ENCODE measurements at regions of chr16 and their contacts with region 1.

Region 1: GRCh38 chr16:89484923-89485679 is 5.3 kb downstream of the ANKRD11 start:
- DNase-seq: peak in 5 of 14 experiments; percentile 15 to 70 (median 60)
- ATAC-seq: no peak
- H3K4me3 ChIP-seq: peak overlapping the region; percentile 24
- H3K4me3 Mint-ChIP-seq: peak overlapping the region; percentile 89
- H3K27ac ChIP-seq: peak overlapping the region; percentile 25 to 79
- H3K27ac Mint-ChIP-seq: peak overlapping the region; percentile 97
- H3K4me1 ChIP-seq: peaks cover 81% of the 10 kb centered on the region
- H3K4me1 Mint-ChIP-seq: peaks cover 89% of the 10 kb centered on the region
- H3K27me3 ChIP-seq: no peaks in the 10 kb centered on the region
- H3K27me3 Mint-ChIP-seq: no peaks in the 10 kb centered on the region
- CTCF ChIP-seq: no peak

Region 2: DNA sequence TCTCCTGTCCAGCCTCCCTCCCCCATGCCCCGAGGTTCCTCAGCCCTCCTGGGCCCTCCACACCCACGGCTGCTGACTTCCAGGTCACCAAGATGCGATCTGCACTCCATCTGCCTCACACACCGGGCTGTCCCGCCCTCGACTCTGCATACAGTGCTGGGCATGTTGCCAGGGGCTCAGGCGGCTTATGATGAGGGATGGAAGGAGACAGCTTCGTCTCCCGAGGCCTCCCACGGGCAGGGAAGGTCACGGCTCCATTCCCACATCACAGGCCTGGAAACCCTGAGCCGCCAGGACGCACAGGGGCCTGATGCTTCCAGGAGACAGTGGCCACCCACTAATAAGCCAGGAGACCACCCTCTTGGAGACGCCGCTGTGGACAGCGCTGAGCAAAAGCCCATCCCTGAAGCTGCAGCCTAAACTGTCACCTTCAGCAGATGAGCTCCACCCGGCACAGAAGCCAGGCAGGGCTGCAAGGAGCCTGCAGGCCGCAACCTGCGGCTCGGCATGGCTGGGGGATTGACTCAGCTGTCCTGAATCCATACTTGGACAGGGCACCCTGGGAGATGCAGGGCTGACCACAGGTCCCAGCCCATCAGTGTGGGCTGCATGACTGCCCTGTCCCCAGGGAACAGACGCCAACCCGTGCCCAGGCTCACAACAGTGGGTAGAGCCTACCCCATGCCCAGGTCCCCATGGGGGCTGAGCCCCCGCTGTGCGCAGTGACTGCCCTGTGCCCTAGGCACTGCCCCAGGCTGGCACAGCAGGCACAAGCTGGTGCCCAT is 1650.3 kb before region 1 on chr16:
- CTCF ChIA-PET with region 1: no interaction called
- POLR2A ChIA-PET with region 1: no interaction called
- intact Hi-C with region 1: no loop called
- DNase-seq: no peak
- ATAC-seq: no peak
- H3K4me3 ChIP-seq: no peak overlapping the region
- H3K4me3 Mint-ChIP-seq: no peak overlapping the region
- H3K27ac ChIP-seq: no peak overlapping the region
- H3K27ac Mint-ChIP-seq: no peak overlapping the region
- H3K4me1 ChIP-seq: no peaks in the 10 kb centered on the region
- H3K4me1 Mint-ChIP-seq: no peaks in the 10 kb centered on the region
- H3K27me3 ChIP-seq: no peaks in the 10 kb centered on the region
- H3K27me3 Mint-ChIP-seq: no peaks in the 10 kb centered on the region
- CTCF ChIP-seq: no peak

Region 3: GRCh38 chr16:89319883-89320781 is 165.0 kb before region 1 on chr16:
- CTCF ChIA-PET with region 1: interaction called, 4 read pairs
- POLR2A ChIA-PET with region 1: interaction called, 10 read pairs
- intact Hi-C with region 1: loop called in 1 of 2 experiments (anchors 5 kb)
- DNase-seq: peak in 5 of 14 experiments; percentile 21 to 55 (median 45)
- ATAC-seq: no peak
- H3K4me3 ChIP-seq: no peak overlapping the region
- H3K4me3 Mint-ChIP-seq: peak overlapping the region; percentile 38
- H3K27ac ChIP-seq: no peak overlapping the region
- H3K27ac Mint-ChIP-seq: peak overlapping the region; percentile 98
- H3K4me1 ChIP-seq: peaks cover 100% of the 10 kb centered on the region
- H3K4me1 Mint-ChIP-seq: peaks cover 91% of the 10 kb centered on the region
- H3K27me3 ChIP-seq: no peaks in the 10 kb centered on the region
- H3K27me3 Mint-ChIP-seq: no peaks in the 10 kb centered on the region
- CTCF ChIP-seq: no peak

Region 4: GRCh38 chr16:89330177-89330856 is 154.8 kb before region 1 on chr16:
- CTCF ChIA-PET with region 1: no interaction called
- POLR2A ChIA-PET with region 1: interaction called, 4 read pairs
- intact Hi-C with region 1: loop called (anchors 2 to 5 kb)
- DNase-seq: peak in 6 of 14 experiments; percentile 32 to 84 (median 72)
- ATAC-seq: peak; percentile 67
- H3K4me3 ChIP-seq: peak overlapping the region; percentile 13
- H3K4me3 Mint-ChIP-seq: peak overlapping the region; percentile 10
- H3K27ac ChIP-seq: peak overlapping the region; percentile 60 to 67
- H3K27ac Mint-ChIP-seq: peak overlapping the region; percentile 80
- H3K4me1 ChIP-seq: peaks cover 82% of the 10 kb centered on the region
- H3K4me1 Mint-ChIP-seq: peaks cover 84% of the 10 kb centered on the region
- H3K27me3 ChIP-seq: no peaks in the 10 kb centered on the region
- H3K27me3 Mint-ChIP-seq: no peaks in the 10 kb centered on the region
- CTCF ChIP-seq: no peak

Region 5: GRCh38 chr16:89410794-89411309 is 74.2 kb before region 1 on chr16:
- CTCF ChIA-PET with region 1: interaction called, 4 read pairs
- POLR2A ChIA-PET with region 1: interaction called, 9 read pairs
- intact Hi-C with region 1: loop called (anchors 2 to 5 kb)
- DNase-seq: peak in 5 of 14 experiments; percentile 28 to 54 (median 34)
- ATAC-seq: no peak
- H3K4me3 ChIP-seq: no peak overlapping the region
- H3K4me3 Mint-ChIP-seq: peak overlapping the region; percentile 54
- H3K27ac ChIP-seq: peak overlapping the region; percentile 34 to 69
- H3K27ac Mint-ChIP-seq: peak overlapping the region; percentile 95
- H3K4me1 ChIP-seq: peaks cover 92% of the 10 kb centered on the region
- H3K4me1 Mint-ChIP-seq: peaks cover 87% of the 10 kb centered on the region
- H3K27me3 ChIP-seq: no peaks in the 10 kb centered on the region
- H3K27me3 Mint-ChIP-seq: no peaks in the 10 kb centered on the region
- CTCF ChIP-seq: no peak

Region 6: GRCh38 chr16:89442990-89443731 is 41.9 kb before region 1 on chr16:
- CTCF ChIA-PET with region 1: no interaction called
- POLR2A ChIA-PET with region 1: interaction called, 15 read pairs
- intact Hi-C with region 1: loop called (anchors 2 to 5 kb)
- DNase-seq: peak in 2 of 14 experiments; percentile 28 to 43
- ATAC-seq: peak; percentile 33
- H3K4me3 ChIP-seq: no peak overlapping the region
- H3K4me3 Mint-ChIP-seq: peak overlapping the region; percentile 75
- H3K27ac ChIP-seq: no peak overlapping the region
- H3K27ac Mint-ChIP-seq: peak overlapping the region; percentile 48
- H3K4me1 ChIP-seq: peaks cover 92% of the 10 kb centered on the region
- H3K4me1 Mint-ChIP-seq: peaks cover 22% of the 10 kb centered on the region
- H3K27me3 ChIP-seq: no peaks in the 10 kb centered on the region
- H3K27me3 Mint-ChIP-seq: no peaks in the 10 kb centered on the region
- CTCF ChIP-seq: no peak

Region 7: DNA sequence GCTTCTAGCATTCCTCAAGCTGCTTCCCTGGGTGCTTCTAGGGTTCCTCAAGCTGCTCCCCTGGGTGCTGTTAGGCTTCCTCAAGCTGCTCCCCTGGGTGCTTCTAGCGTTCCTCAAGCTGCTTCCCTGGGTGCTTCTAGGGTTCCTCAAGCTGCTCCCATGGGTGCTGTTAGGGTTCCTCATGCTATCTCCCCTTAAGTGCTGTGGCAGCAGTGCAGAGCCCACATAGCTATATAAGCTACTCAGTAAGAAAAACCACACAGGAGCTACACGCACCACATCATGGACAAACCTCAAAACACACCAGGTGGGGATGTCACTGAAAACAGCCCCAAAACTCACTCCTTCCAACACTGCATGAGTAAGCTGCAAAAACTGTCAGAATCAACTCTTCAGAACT is 29.9 kb before region 1 on chr16:
- CTCF ChIA-PET with region 1: interaction called, 4 read pairs
- POLR2A ChIA-PET with region 1: interaction called, 11 read pairs
- intact Hi-C with region 1: no loop called
- DNase-seq: peak in 3 of 14 experiments; percentile 18 to 49 (median 47)
- ATAC-seq: peak; percentile 75
- H3K4me3 ChIP-seq: no peak overlapping the region
- H3K4me3 Mint-ChIP-seq: peak overlapping the region; percentile 52
- H3K27ac ChIP-seq: no peak overlapping the region
- H3K27ac Mint-ChIP-seq: peak overlapping the region; percentile 43
- H3K4me1 ChIP-seq: peaks cover 75% of the 10 kb centered on the region
- H3K4me1 Mint-ChIP-seq: peaks cover 80% of the 10 kb centered on the region
- H3K27me3 ChIP-seq: no peaks in the 10 kb centered on the region
- H3K27me3 Mint-ChIP-seq: no peaks in the 10 kb centered on the region
- CTCF ChIP-seq: no peak

Region 8: GRCh38 chr16:89473791-89474414 is 11.2 kb before region 1 on chr16:
- CTCF ChIA-PET with region 1: interaction called, 9 read pairs
- POLR2A ChIA-PET with region 1: interaction called, 12 read pairs
- intact Hi-C with region 1: loop called in 1 of 2 experiments (anchors 2 kb)
- DNase-seq: no peak
- ATAC-seq: no peak
- H3K4me3 ChIP-seq: no peak overlapping the region
- H3K4me3 Mint-ChIP-seq: peak overlapping the region; percentile 79
- H3K27ac ChIP-seq: no peak overlapping the region
- H3K27ac Mint-ChIP-seq: peak overlapping the region; percentile 71
- H3K4me1 ChIP-seq: peaks cover 95% of the 10 kb centered on the region
- H3K4me1 Mint-ChIP-seq: peaks cover 82% of the 10 kb centered on the region
- H3K27me3 ChIP-seq: no peaks in the 10 kb centered on the region
- H3K27me3 Mint-ChIP-seq: no peaks in the 10 kb centered on the region
- CTCF ChIP-seq: no peak

Region 9: DNA sequence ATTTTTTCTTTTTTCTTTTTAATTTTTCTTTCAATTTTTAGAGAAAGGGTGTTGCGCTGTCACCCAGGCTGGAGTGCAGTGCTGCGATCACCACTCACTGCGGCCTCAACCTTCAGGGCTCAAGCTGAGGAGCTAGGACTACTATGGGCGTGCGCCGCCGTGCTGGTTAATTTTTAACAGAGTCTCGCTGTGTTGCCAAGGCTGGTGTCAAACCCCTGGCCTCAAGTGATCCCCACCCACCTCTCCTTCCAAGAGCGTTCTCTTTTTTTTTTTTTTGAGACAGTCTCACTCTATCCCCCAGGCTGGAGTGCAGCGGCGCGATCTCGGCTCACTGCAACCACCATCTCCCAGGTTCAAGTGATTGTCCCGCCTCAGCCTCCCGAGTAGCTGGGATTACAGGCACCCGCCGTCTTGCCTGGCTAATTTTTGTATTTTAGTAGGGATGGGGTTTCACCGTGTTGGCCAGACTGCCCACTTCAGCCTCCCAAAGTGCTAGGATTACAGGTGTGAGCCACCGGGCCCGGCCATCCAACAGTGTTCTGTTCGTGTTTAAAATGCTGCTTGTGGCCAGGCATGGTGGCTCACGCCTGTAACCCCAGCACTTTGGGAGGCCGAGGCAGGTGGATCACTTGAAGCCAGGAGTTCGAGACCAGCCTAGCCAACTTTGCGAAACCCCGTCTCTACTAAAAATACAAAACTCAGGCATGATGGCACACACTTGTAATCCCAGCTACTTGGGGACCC is 60.9 kb after region 1 on chr16:
- CTCF ChIA-PET with region 1: no interaction called
- POLR2A ChIA-PET with region 1: no interaction called
- intact Hi-C with region 1: no loop called
- DNase-seq: no peak
- ATAC-seq: no peak
- H3K4me3 ChIP-seq: no peak overlapping the region
- H3K4me3 Mint-ChIP-seq: no peak overlapping the region
- H3K27ac ChIP-seq: no peak overlapping the region
- H3K27ac Mint-ChIP-seq: no peak overlapping the region
- H3K4me1 ChIP-seq: peaks cover 19% of the 10 kb centered on the region
- H3K4me1 Mint-ChIP-seq: peaks cover 19% of the 10 kb centered on the region
- H3K27me3 ChIP-seq: no peaks in the 10 kb centered on the region
- H3K27me3 Mint-ChIP-seq: no peaks in the 10 kb centered on the region
- CTCF ChIP-seq: no peak